T-cell (primary cell): ENCODE measurements at regions of chr2 and their contacts with region 1.

Region 1: DNA sequence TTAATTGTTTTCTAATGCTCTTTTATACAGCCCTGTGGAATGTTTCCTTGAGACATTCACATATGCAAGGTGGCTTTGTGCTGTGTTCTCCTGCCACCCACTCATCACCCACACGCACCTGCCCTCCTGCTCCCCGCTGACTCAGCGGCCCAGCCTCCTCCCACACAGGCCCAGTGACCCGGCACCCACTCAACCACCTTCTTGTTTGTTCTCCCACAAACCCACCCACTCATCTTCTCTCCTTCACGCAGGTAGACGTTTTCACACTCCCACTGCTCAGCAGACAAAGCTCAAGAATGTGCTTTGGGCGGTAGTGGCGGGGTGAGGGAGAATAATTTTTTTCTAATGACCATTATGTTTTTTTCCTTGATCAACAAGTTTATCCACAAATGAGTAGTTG is 28.6 kb upstream of the NEMP2 start:
- DNase-seq: peak in 7 of 35 experiments; percentile 6 to 21 (median 12)
- ATAC-seq: peak; percentile 41 to 71 (median 55)
- H3K4me3 ChIP-seq: no peak overlapping the region
- H3K4me3 Mint-ChIP-seq: no peak overlapping the region
- H3K27ac ChIP-seq: no peak overlapping the region
- H3K27ac Mint-ChIP-seq: peak overlapping the region in 1 of 2 donors; percentile 36
- H3K4me1 ChIP-seq: peaks cover 3 to 7% of the 10 kb centered on the region in 2 experiments
- H3K4me1 Mint-ChIP-seq: peaks cover 13 to 19% (median 13%) of the 10 kb centered on the region in 3 donors
- H3K27me3 ChIP-seq: no peaks in the 10 kb centered on the region
- H3K27me3 Mint-ChIP-seq: no peaks in the 10 kb centered on the region

Region 2: DNA sequence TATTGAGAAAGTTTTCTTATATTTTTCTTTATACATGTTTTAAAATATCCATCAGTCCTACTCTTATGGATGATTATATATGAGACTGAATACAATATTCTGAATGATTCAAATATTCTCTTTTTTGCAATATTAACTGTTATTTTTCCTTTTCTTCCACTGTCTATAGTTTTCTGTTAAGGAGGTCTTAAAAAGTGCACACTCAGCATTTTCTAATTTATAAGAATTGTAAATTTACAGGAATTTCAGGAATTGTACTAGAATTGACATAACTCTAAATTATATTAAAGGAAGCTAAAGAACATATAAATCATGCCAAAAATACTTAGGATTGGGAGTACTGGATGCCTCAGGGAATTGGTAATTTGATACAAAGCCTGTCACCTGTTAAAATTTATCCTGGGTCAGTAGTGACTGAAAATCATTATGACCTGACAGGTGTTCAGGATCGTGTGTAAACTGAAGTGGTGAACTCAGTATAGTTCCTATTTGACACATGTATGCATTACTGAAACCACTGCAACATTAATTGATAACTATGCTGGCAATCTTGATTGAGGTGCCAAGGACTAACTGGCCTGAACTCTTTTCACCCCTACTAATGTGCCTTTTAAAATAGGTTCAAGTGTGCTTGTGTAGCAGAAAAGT is 531.0 kb before region 1 on chr2:
- CTCF ChIA-PET with region 1: no interaction called
- POLR2A ChIA-PET with region 1: interaction called in 1 of 2 experiments, 19 read pairs
- DNase-seq: no peak
- ATAC-seq: no peak
- H3K4me3 ChIP-seq: no peak overlapping the region
- H3K4me3 Mint-ChIP-seq: no peak overlapping the region
- H3K27ac ChIP-seq: no peak overlapping the region
- H3K27ac Mint-ChIP-seq: no peak overlapping the region
- H3K4me1 ChIP-seq: no peaks in the 10 kb centered on the region
- H3K4me1 Mint-ChIP-seq: no peaks in the 10 kb centered on the region
- H3K27me3 ChIP-seq: no peaks in the 10 kb centered on the region
- H3K27me3 Mint-ChIP-seq: peaks cover 19 to 24% of the 10 kb centered on the region in 2 donors

Region 3: GRCh38 chr2:190197143-190197720 is 365.9 kb before region 1 on chr2:
- CTCF ChIA-PET with region 1: no interaction called
- POLR2A ChIA-PET with region 1: no interaction called
- DNase-seq: no peak
- ATAC-seq: no peak
- H3K4me3 ChIP-seq: no peak overlapping the region
- H3K4me3 Mint-ChIP-seq: no peak overlapping the region
- H3K27ac ChIP-seq: no peak overlapping the region
- H3K27ac Mint-ChIP-seq: no peak overlapping the region
- H3K4me1 ChIP-seq: no peaks in the 10 kb centered on the region
- H3K4me1 Mint-ChIP-seq: no peaks in the 10 kb centered on the region
- H3K27me3 ChIP-seq: no peaks in the 10 kb centered on the region
- H3K27me3 Mint-ChIP-seq: no peaks in the 10 kb centered on the region

Region 4: DNA sequence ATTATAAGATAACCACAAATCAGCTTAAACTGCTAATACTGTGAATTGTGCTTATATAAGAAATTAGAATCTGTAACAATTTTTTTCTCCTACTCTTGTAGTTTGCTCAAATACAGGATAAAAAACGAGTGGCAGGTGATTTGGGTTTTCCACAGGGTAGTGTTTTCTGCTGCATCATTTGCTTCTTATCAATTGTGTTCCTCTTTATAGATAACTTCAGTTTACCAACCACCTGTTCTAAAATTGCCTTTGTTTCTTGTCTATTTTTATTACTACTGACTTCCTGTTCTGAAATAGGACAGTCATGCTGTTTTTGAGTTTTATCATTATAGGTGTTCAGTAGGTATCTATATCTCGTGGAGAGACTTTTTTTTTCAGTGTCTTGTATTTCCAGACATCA is 98.0 kb before region 1 on chr2:
- CTCF ChIA-PET with region 1: no interaction called
- POLR2A ChIA-PET with region 1: no interaction called
- DNase-seq: no peak
- ATAC-seq: no peak
- H3K4me3 ChIP-seq: no peak overlapping the region
- H3K4me3 Mint-ChIP-seq: no peak overlapping the region
- H3K27ac ChIP-seq: no peak overlapping the region
- H3K27ac Mint-ChIP-seq: peak overlapping the region; percentile 29 to 59
- H3K4me1 ChIP-seq: peaks cover 16 to 25% of the 10 kb centered on the region in 2 experiments
- H3K4me1 Mint-ChIP-seq: peaks cover 77 to 85% (median 84%) of the 10 kb centered on the region in 3 donors
- H3K27me3 ChIP-seq: no peaks in the 10 kb centered on the region
- H3K27me3 Mint-ChIP-seq: no peaks in the 10 kb centered on the region

Region 5: GRCh38 chr2:190911813-190912212 is 348.7 kb after region 1 on chr2:
- CTCF ChIA-PET with region 1: no interaction called
- POLR2A ChIA-PET with region 1: no interaction called
- DNase-seq: peak in 1 of 35 experiments; percentile 14
- ATAC-seq: no peak
- H3K4me3 ChIP-seq: no peak overlapping the region
- H3K4me3 Mint-ChIP-seq: no peak overlapping the region
- H3K27ac ChIP-seq: no peak overlapping the region
- H3K27ac Mint-ChIP-seq: peak overlapping the region in 1 of 2 donors; percentile 76
- H3K4me1 ChIP-seq: peaks cover 0 to 2% of the 10 kb centered on the region in 2 experiments
- H3K4me1 Mint-ChIP-seq: peaks cover 39 to 47% (median 46%) of the 10 kb centered on the region in 3 donors
- H3K27me3 ChIP-seq: no peaks in the 10 kb centered on the region
- H3K27me3 Mint-ChIP-seq: no peaks in the 10 kb centered on the region